ENCODE measurements at regions of chr20 and their contacts with region 1.

Region 1: DNA sequence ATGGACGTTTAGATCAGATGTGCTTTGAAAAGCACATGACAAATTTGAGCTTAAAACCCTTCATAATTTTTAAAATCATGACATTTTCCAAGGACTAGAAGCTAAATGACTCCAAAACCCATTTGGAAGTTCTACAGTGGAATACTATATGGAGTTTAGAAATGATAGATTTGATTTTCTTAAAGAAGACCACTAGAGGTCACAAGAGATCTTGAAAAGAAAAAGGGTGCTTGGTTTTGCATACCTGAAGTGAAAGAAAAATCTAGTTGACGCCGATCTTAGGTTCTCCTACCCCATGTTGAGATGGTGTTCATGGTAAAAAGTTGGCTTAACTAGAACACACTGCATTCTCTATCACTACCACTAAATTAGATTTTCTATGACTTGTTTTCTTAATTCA is 31.5 kb downstream of the CFAP61 start:
- DNase-seq: peak; percentile 60
- ATAC-seq: no peak
- H3K4me3 ChIP-seq: no peak overlapping the region
- H3K4me3 Mint-ChIP-seq: no peak overlapping the region
- H3K27ac ChIP-seq: no peak overlapping the region
- H3K27ac Mint-ChIP-seq: no peak overlapping the region
- H3K4me1 ChIP-seq: peaks cover 0 to 4% of the 10 kb centered on the region in 2 donors
- H3K4me1 Mint-ChIP-seq: peaks cover 2% of the 10 kb centered on the region
- H3K27me3 ChIP-seq: peaks cover 0 to 4% (median 0%) of the 10 kb centered on the region in 4 experiments
- H3K27me3 Mint-ChIP-seq: peaks cover 16% of the 10 kb centered on the region
- CTCF ChIP-seq: peak; percentile 78

Region 2: DNA sequence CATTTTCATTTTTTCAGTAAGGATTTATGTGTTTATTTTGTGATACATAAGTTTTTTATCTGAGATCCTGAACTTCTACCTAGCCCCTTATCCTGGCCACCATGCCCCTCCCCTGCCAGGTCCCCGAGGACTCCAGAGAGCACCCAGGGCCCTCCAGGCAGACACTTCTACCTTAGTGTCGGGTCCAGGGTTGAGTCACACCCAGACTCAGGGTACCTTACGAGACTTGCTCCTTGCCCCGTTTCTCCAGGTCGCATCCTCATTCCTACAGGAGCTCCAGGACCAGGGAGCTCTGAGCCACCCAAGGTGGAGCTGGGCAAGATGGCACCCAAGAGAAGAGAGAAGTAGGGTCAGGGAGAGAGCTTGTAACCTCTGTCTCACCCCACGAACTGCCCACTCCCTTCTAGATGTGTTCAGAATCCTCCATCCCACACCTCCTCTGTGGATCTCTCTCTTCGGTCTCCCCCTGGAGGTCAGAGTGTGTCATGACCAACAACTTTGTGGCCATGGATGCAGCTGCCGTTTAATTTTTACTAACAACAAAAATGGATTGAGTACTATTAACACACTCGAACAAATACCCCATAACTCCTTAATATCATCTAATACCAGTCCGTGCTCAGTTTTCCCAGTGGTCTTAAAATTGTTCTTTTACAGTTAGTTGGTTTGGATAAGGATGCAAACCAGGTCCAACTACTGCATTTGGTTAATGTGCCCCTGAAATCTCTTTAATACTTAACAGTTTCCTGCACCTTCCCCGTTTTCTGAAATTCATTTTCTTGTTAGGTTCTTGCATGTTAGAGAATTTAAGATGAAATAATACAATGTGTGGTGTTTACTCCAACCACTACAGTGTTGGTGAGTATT is 153.5 kb after region 1 on chr20:
- CTCF ChIA-PET with region 1: interaction called, 3 read pairs
- POLR2A ChIA-PET with region 1: no interaction called
- intact Hi-C with region 1: loop called (anchors 2 kb)
- DNase-seq: peak; percentile 9
- ATAC-seq: no peak
- H3K4me3 ChIP-seq: no peak overlapping the region
- H3K4me3 Mint-ChIP-seq: no peak overlapping the region
- H3K27ac ChIP-seq: no peak overlapping the region
- H3K27ac Mint-ChIP-seq: no peak overlapping the region
- H3K4me1 ChIP-seq: no peaks in the 10 kb centered on the region
- H3K4me1 Mint-ChIP-seq: no peaks in the 10 kb centered on the region
- H3K27me3 ChIP-seq: peaks cover 0 to 6% (median 0%) of the 10 kb centered on the region in 4 experiments
- H3K27me3 Mint-ChIP-seq: peaks cover 12% of the 10 kb centered on the region
- CTCF ChIP-seq: peak; percentile 61

Region 3: DNA sequence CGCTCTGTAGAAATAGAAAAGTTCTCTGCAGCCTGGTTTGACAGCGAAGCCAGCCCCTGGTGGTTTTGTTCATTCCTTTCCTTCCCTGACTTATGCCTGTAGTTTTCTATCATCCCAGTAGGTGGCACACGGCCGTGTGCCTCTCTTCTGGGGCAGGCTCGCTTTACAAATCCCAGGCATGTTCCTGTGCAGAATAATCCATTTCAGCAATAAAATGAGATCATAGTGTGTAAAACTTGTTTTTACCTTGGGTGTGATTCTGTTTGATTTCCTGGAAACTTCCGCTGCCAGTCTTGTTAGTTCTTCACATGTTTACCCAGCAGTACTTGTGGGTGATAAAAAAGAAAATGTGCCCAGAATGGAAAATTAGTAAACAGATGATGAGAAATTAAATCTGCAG is 276.7 kb after region 1 on chr20:
- CTCF ChIA-PET with region 1: no interaction called
- POLR2A ChIA-PET with region 1: no interaction called
- intact Hi-C with region 1: loop called (anchors 5 kb)
- DNase-seq: peak; percentile 60
- ATAC-seq: peak; percentile 60
- H3K4me3 ChIP-seq: no peak overlapping the region
- H3K4me3 Mint-ChIP-seq: peak overlapping the region; percentile 14
- H3K27ac ChIP-seq: no peak overlapping the region
- H3K27ac Mint-ChIP-seq: no peak overlapping the region
- H3K4me1 ChIP-seq: peaks cover 9 to 18% of the 10 kb centered on the region in 2 donors
- H3K4me1 Mint-ChIP-seq: peaks cover 30% of the 10 kb centered on the region
- H3K27me3 ChIP-seq: peaks cover 0 to 46% (median 23%) of the 10 kb centered on the region in 4 experiments
- H3K27me3 Mint-ChIP-seq: peaks cover 47% of the 10 kb centered on the region
- CTCF ChIP-seq: peak; percentile 74

Region 4: DNA sequence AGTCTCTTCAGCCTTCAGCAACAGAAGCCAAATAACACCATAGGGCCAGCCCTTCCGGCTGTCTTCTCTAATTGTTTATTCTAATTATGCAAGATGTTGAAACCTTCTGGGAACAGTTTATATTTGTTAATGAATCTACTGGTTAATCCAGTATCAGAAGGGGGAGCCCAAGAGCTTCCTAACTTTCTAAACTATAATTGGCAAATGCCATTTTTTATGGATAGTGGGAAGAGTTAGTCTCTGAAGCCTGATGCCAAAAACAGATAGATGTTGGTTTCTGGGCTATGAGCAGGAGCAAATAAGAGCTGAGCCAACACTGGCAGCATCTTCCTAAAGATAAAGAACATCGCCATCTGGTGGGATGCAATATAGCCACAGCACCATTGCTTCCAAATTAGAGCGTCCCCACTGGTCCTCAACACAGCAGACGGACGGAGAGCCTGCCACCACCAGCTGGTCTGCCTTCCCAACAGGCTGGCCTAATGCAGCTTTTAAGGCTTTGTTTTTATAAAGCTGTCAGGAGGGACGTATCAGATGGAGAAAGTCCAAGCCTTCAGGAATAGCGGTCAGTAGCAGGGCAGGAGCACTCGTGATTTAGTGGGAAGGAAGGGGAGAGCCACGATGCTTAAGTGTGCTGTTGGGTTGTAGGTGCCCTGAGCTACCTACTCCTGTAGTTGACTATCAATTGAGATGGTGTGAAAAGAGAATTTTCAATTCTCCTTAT is 509.8 kb after region 1 on chr20:
- CTCF ChIA-PET with region 1: interaction called, 37 read pairs
- POLR2A ChIA-PET with region 1: no interaction called
- intact Hi-C with region 1: loop called (anchors 1 kb)
- DNase-seq: peak; percentile 25
- ATAC-seq: no peak
- H3K4me3 ChIP-seq: no peak overlapping the region
- H3K4me3 Mint-ChIP-seq: no peak overlapping the region
- H3K27ac ChIP-seq: no peak overlapping the region
- H3K27ac Mint-ChIP-seq: no peak overlapping the region
- H3K4me1 ChIP-seq: no peaks in the 10 kb centered on the region
- H3K4me1 Mint-ChIP-seq: no peaks in the 10 kb centered on the region
- H3K27me3 ChIP-seq: no peaks in the 10 kb centered on the region
- H3K27me3 Mint-ChIP-seq: no peaks in the 10 kb centered on the region
- CTCF ChIP-seq: peak; percentile 24

Region 5: DNA sequence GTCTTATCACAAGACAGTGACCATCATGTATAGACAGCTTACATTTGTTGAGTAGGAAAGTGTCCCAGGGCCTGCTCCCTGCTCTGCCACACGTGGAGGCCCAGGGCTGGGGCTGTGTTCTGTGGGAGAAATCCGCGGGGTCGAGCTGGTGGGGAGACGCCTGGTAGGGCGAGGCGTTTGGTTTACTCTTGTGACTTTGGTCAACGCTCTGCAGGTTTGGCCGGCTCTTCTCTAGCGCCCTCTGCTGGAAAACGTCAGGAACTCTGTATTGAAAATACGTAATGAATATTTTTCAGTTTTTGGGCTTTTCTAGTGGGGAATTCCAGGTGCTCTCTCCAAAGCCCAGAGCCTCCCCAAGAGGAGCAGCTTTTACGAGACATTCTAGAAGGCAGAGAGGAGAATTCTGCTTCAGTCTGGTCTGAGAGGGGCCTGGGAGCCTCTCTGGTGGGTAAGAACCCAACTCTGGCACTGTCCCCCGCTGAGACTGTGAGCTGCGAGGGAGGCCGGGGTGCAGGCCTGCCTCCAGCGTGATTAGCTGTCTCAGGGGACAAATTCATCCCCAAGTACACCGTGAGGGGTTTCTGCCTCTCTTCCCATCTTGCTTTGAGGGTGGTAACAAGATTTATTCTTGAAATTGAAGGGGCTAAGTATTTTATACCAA is 741.2 kb after region 1 on chr20:
- CTCF ChIA-PET with region 1: interaction called, 5 read pairs
- POLR2A ChIA-PET with region 1: no interaction called
- intact Hi-C with region 1: loop called (anchors 2 kb)
- DNase-seq: peak; percentile 61
- ATAC-seq: peak; percentile 45
- H3K4me3 ChIP-seq: no peak overlapping the region
- H3K4me3 Mint-ChIP-seq: no peak overlapping the region
- H3K27ac ChIP-seq: no peak overlapping the region
- H3K27ac Mint-ChIP-seq: no peak overlapping the region
- H3K4me1 ChIP-seq: peaks cover 0 to 4% of the 10 kb centered on the region in 2 donors
- H3K4me1 Mint-ChIP-seq: peaks cover 5% of the 10 kb centered on the region
- H3K27me3 ChIP-seq: no peaks in the 10 kb centered on the region
- H3K27me3 Mint-ChIP-seq: peaks cover 34% of the 10 kb centered on the region
- CTCF ChIP-seq: peak; percentile 82

Measured in B cell (primary cell).